Cardiac septum (tissue), 1 donor: ENCODE measurements at regions of chr14 and their contacts with region 1.

Region 1: GRCh38 chr14:21383848-21384493 is at the start of gene SUPT16H:
- DNase-seq: peak; percentile 98
- total RNA-seq, gene SUPT16H: 31.7 TPM

Region 2: GRCh38 chr14:21269252-21270046 is 114.5 kb before region 1 on chr14 and contains the start of gene HNRNPC:
- intact Hi-C with region 1: loop called (anchors 5 kb)
- DNase-seq: peak; percentile 100
- total RNA-seq, gene HNRNPC: 260 TPM

Region 3: GRCh38 chr14:21486640-21487087 is 102.7 kb after region 1 on chr14:
- intact Hi-C with region 1: no loop called
- DNase-seq: no peak